ENCODE measurements at regions of chr2 and their contacts with region 1.

Region 1: DNA sequence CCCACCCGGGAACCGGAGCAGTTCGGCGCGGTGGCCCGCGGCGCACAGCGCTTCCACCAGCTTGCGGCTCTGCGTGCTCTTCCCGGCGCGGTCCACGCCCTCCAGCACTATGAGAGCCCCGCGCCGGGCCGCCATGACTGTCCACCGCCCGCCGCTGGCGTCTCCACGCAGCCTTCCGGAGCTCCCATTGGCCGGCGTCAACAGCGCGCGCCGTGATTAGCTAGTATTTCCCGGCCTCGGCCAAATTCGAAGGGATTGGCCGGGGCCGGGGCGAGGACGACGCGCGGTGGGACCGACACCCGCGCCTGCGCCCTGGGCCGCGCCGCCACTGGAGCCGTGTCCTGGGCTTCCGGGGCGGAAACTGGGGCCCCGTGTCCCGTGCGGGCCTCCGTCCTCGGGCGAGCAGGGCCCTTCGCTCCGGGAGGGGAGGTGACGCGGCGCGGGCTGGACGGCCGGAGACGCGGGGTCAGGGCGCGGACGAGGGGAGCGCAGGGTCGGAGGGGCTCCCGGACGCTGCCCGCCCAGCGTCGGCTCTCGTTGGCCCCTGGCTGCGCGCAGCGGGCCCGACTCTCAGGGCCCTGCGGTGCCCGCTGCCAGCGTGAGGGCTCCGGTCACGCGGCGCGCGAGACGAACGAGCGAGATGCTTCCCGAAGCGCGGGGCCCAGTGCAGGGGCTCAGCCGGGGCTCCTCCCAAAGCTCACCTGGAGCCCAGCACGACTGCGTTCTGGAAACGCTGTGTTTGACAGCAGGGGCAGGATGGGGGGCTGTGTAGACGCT is at the start of gene DTYMK:
- DNase-seq: peak; percentile 94
- ATAC-seq: peak; percentile 95
- H3K4me3 ChIP-seq: peak within 1 kb of the TSS; percentile 92 to 96 (median 94)
- H3K27ac ChIP-seq: peak within 1 kb of the TSS; percentile 95
- H3K4me1 ChIP-seq: peaks cover 28% of the 10 kb centered on the region
- H3K27me3 ChIP-seq: no peaks in the 10 kb centered on the region; a peak in 1 of 5 replicates
- CTCF ChIP-seq: peak; percentile 4; the same call in 1 of the 2 replicates
- EP300 ChIP-seq: 0 out of 4 replicates have a peak, but pooled peaks of 1 of the 2 experiments have one; percentile 34
- POLR2A ChIP-seq: peak; percentile 92
- RAD21 ChIP-seq: peak; percentile 81
- total RNA-seq, gene DTYMK: 124 and 134 TPM in 2 replicates

Region 2: DNA sequence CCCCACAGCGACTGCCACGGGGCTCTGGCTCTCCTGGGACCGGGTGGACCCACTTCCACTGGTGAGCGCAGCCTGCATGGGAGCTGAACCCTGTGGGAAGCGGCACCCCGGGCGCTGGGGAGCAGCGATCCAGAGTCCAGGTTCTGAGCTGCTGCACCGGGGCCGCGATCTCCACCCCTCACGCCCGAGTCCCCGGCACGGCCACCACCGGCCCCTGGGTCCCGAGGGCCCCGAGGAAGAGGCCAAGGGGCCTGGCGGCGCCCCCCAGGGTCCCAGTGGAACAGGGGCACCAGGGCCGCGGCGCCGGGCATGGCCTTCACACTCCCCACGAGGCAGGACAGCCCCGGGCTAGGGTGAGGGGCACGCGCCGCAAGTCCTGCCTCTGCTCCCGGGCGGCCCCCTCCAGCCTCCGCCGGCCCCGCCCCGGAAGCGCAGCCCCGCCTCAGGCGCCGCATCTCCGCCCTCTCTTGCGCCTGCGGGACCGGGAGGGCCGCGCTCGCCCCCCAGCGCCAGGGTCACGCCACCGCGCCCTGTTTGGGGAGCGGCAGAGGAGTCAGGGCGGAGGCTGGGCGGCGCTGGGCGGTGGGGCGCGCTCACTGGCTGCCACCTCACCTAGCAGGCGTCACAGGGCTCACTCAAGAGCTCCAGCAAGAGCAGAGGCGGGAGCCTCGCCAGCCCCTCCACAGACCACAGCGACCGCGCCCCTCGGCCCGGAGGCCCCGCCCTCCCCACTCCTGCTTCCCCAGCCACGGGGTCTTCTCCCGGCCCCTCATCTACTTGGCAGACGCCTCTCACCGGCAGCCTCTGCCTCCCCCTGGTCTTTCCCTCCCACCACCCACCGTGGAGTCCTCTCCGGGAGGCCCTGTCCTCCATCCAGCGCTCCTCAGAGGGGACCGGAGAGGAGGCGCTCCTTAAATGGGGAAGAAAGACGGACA is 76.7 kb before region 1 on chr2:
- CTCF ChIA-PET with region 1: no interaction called
- POLR2A ChIA-PET with region 1: interaction called, 6 read pairs
- in situ Hi-C with region 1: no loop called
- intact Hi-C with region 1: loop called (anchors 1 kb)
- DNase-seq: peak; percentile 93
- ATAC-seq: peak; percentile 99
- H3K4me3 ChIP-seq: peak overlapping the region; percentile 75 to 89 (median 78)
- H3K27ac ChIP-seq: peak overlapping the region; percentile 86
- H3K4me1 ChIP-seq: peaks cover 32% of the 10 kb centered on the region
- H3K27me3 ChIP-seq: no peaks in the 10 kb centered on the region
- CTCF ChIP-seq: peak; percentile 90
- EP300 ChIP-seq: 0 out of 4 replicates have a peak, but pooled peaks of 1 of the 2 experiments have one; percentile 34
- POLR2A ChIP-seq: peak; percentile 77 to 95
- RAD21 ChIP-seq: peak; percentile 95

Region 3: DNA sequence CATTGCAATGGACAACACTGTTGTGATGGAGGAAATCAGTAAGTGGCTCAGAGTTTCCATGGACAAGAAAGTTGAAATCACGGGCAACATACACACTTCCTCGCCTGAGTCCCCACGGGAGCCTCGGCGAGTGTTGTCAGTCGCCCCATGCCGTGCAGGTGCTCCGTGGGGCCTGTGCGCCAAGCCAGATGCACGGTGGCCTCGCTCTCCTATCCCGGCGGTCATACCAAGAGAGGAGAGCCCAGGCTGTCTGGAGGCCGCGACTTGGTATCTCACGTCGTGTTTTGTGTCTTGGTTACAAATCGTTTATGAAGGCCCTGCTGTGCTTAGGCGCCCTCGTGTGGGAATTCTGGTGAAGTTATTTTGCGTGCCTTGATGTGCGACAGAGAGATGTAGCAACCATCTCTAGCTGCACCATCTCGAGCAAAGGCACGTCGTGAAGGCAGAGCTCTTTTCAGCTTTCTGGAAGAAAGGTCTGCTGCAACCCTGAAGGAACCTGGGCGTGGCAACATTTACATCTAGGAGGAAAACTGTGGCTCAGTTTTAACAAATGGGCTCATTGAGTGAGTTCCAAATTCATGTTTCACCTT is 27.6 kb before region 1 on chr2:
- CTCF ChIA-PET with region 1: no interaction called
- POLR2A ChIA-PET with region 1: interaction called, 18 read pairs
- in situ Hi-C with region 1: no loop called
- intact Hi-C with region 1: no loop called
- DNase-seq: peak; percentile 78
- ATAC-seq: peak; percentile 74
- H3K4me3 ChIP-seq: no peak overlapping the region
- H3K27ac ChIP-seq: peak overlapping the region; percentile 18
- H3K4me1 ChIP-seq: no peaks in the 10 kb centered on the region
- H3K27me3 ChIP-seq: no peaks in the 10 kb centered on the region
- CTCF ChIP-seq: peak; percentile 93
- EP300 ChIP-seq: no peak
- POLR2A ChIP-seq: no peak
- RAD21 ChIP-seq: peak; percentile 93

Region 4: DNA sequence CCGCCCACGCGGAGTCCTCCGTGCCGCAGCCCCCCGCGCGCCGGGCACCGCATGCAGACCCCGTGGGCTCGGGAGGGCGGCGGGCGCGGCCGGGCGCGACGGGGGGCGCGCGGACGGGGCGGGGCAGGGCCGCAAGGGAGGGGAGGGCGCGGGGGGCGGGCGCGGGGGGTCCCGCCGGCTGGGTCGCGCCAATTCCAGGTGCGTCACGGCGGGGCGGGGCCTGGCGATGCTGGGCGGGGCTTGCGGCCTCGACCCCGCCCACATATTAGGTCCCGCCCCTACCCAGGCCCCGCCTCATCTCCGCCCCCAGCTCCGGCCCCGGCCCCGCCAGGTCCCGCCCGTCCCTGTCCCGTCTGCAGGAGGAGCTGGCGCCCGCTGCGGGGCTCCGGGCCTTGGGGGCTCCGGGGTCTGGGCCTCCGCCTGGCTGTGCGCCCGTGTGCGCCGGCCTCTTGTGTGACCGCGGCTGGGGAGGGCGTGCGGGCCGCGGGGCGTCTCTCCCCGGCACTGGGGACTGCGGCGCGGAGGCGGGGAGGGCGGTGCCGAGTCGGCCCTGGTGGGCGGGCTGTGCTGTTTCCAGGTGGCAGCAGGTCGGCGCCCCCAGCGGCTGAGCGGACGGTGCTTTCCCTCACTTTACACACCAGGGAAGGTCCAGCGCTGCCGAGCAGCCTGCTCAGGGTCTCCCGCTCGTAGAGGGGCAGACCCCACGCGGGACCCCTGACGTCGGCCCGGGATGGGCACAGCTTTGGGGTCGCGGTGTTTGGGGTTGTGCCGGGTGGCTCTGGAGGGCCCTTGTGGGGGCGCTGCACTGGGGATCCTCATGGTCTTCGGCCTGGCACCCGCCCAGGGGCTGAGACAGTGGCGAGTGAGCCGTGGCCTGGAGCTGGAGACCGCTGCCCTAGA is 15.5 kb after region 1 on chr2:
- CTCF ChIA-PET with region 1: no interaction called
- POLR2A ChIA-PET with region 1: interaction called, 234 read pairs
- in situ Hi-C with region 1: no loop called
- intact Hi-C with region 1: loop called (anchors 1 kb)
- DNase-seq: peak; percentile 85
- ATAC-seq: peak; percentile 86
- H3K4me3 ChIP-seq: peak overlapping the region; percentile 81 to 99 (median 94)
- H3K27ac ChIP-seq: peak overlapping the region; percentile 98
- H3K4me1 ChIP-seq: peaks cover 28% of the 10 kb centered on the region
- H3K27me3 ChIP-seq: no peaks in the 10 kb centered on the region
- CTCF ChIP-seq: peak; percentile 86
- EP300 ChIP-seq: no peak
- POLR2A ChIP-seq: peak; percentile 38 to 45; a peak in 2 of 4 replicates
- RAD21 ChIP-seq: peak; percentile 81

Region 5: GRCh38 chr2:241774646-241775222 is 87.9 kb after region 1 on chr2:
- CTCF ChIA-PET with region 1: no interaction called
- POLR2A ChIA-PET with region 1: interaction called, 12 read pairs
- in situ Hi-C with region 1: no loop called
- intact Hi-C with region 1: no loop called
- DNase-seq: peak; percentile 79
- ATAC-seq: peak; percentile 12
- H3K4me3 ChIP-seq: peak overlapping the region; percentile 49 to 82 (median 63)
- H3K27ac ChIP-seq: peak overlapping the region; percentile 92
- H3K4me1 ChIP-seq: peaks cover 75% of the 10 kb centered on the region
- H3K27me3 ChIP-seq: no peaks in the 10 kb centered on the region; a peak in 1 of 5 replicates
- CTCF ChIP-seq: no peak
- EP300 ChIP-seq: no peak
- POLR2A ChIP-seq: peak in 1 of 2 experiments; percentile 35; a peak in 1 of 4 replicates
- RAD21 ChIP-seq: no peak; the same call in 1 of the 2 replicates